Activated T-helper 2 cell treated with anti-CD3 and anti-CD28 coated beads, Interferon-gamma antibody, Interleukin-2, Interleukin-4, amounts not matched to agents 10 μg/mL and 5 μg/mL and 100 μg/mL, durations not matched to agents 14 hours and 24 hours and 36 hours (primary cell): ENCODE measurements at regions of chr11 and their contacts with region 1.

Region 1: GRCh38 chr11:34357701-34358257 is at the start of gene ABTB2:
- DNase-seq: peak; percentile 97
- H3K4me3 Mint-ChIP-seq: peak within 1 kb of the TSS; percentile 92
- H3K27ac Mint-ChIP-seq: peak within 1 kb of the TSS; percentile 65
- H3K4me1 Mint-ChIP-seq: peaks cover 39% of the 10 kb centered on the region
- H3K27me3 Mint-ChIP-seq: peaks cover 37% of the 10 kb centered on the region
- total RNA-seq, gene ABTB2: 32.9 and 33.1 TPM in 2 replicates

Region 2: GRCh38 chr11:33722579-33723225 is 635.1 kb before region 1 on chr11:
- intact Hi-C with region 1: loop called (anchors 5 kb)
- DNase-seq: peak; percentile 38
- H3K4me3 Mint-ChIP-seq: peak overlapping the region; percentile 48
- H3K27ac Mint-ChIP-seq: peak overlapping the region; percentile 94
- H3K4me1 Mint-ChIP-seq: peaks cover 69% of the 10 kb centered on the region
- H3K27me3 Mint-ChIP-seq: peaks cover 6% of the 10 kb centered on the region

Region 3: GRCh38 chr11:33857933-33858371 is 499.8 kb before region 1 on chr11:
- intact Hi-C with region 1: loop called (anchors 1 kb)
- DNase-seq: peak; percentile 48
- H3K4me3 Mint-ChIP-seq: no peak overlapping the region
- H3K27ac Mint-ChIP-seq: no peak overlapping the region
- H3K4me1 Mint-ChIP-seq: no peaks in the 10 kb centered on the region
- H3K27me3 Mint-ChIP-seq: peaks cover 49% of the 10 kb centered on the region

Region 4: GRCh38 chr11:34051349-34052035 is 306.3 kb before region 1 on chr11 and contains the start of gene CAPRIN1:
- intact Hi-C with region 1: loop called (anchors 1 kb)
- DNase-seq: peak; percentile 83
- H3K4me3 Mint-ChIP-seq: peak within 1 kb of the TSS; percentile 93
- H3K27ac Mint-ChIP-seq: peak within 1 kb of the TSS; percentile 96
- H3K4me1 Mint-ChIP-seq: peaks cover 17% of the 10 kb centered on the region
- H3K27me3 Mint-ChIP-seq: peaks cover 5% of the 10 kb centered on the region
- total RNA-seq, gene CAPRIN1: 285 and 286 TPM in 2 replicates

Region 5: GRCh38 chr11:34174412-34175041 is 183.3 kb before region 1 on chr11:
- intact Hi-C with region 1: loop called (anchors 1 kb)
- DNase-seq: peak; percentile 72
- H3K4me3 Mint-ChIP-seq: peak overlapping the region; percentile 62
- H3K27ac Mint-ChIP-seq: peak overlapping the region; percentile 49
- H3K4me1 Mint-ChIP-seq: peaks cover 46% of the 10 kb centered on the region
- H3K27me3 Mint-ChIP-seq: no peaks in the 10 kb centered on the region

Region 6: DNA sequence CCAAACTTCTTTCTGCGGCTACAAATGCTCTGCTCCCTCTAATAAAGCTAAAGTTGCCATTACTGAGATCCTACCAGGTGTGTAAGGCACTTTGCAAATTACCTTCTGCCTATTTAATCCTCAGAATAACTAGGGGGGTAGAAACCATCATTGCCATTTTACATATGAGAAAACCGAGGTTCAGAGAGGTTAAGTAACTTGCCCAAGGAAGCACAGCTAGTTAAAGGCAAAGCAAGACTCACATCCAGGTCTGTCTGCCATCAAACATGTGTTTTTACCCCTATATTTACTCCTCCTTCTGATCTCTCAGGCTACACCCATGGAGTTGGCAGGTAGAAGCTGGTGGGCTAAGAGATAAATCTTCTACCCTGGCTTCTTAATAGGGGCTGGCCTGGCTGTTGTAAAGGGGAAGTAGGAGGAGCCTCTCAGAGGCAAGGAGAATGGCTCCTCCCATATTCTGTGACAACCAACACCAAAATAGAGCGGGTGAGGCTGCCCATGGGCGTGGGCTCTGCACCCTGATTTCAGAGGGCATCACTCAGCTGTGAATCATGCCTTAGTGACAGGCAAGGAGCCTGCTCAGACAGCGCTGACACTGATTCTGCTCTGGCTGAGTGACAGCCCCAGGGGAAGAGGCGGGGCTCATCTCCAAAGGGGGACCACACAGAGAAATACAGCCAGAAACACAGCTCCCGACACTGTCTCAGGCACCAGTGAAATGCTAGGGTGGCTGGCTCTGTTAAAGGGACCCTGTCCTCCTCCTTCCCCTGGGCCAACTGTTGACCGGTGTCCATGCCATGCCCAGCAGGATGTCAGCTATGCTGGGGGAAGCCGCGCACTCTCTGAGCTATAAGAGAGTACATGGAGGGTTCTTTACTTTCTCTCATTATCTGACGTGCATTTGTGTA is 106.8 kb before region 1 on chr11:
- intact Hi-C with region 1: loop called (anchors 1 kb)
- DNase-seq: peak; percentile 61
- H3K4me3 Mint-ChIP-seq: peak overlapping the region; percentile 34
- H3K27ac Mint-ChIP-seq: peak overlapping the region; percentile 47
- H3K4me1 Mint-ChIP-seq: peaks cover 68% of the 10 kb centered on the region
- H3K27me3 Mint-ChIP-seq: no peaks in the 10 kb centered on the region

Region 7: GRCh38 chr11:34468209-34468841 is 110.5 kb after region 1 on chr11:
- intact Hi-C with region 1: loop called (anchors 5 kb)
- DNase-seq: peak; percentile 20
- H3K4me3 Mint-ChIP-seq: no peak overlapping the region
- H3K27ac Mint-ChIP-seq: no peak overlapping the region
- H3K4me1 Mint-ChIP-seq: peaks cover 4% of the 10 kb centered on the region
- H3K27me3 Mint-ChIP-seq: no peaks in the 10 kb centered on the region